ENCODE measurements at regions of chr14 and their contacts with region 1.

Region 1: DNA sequence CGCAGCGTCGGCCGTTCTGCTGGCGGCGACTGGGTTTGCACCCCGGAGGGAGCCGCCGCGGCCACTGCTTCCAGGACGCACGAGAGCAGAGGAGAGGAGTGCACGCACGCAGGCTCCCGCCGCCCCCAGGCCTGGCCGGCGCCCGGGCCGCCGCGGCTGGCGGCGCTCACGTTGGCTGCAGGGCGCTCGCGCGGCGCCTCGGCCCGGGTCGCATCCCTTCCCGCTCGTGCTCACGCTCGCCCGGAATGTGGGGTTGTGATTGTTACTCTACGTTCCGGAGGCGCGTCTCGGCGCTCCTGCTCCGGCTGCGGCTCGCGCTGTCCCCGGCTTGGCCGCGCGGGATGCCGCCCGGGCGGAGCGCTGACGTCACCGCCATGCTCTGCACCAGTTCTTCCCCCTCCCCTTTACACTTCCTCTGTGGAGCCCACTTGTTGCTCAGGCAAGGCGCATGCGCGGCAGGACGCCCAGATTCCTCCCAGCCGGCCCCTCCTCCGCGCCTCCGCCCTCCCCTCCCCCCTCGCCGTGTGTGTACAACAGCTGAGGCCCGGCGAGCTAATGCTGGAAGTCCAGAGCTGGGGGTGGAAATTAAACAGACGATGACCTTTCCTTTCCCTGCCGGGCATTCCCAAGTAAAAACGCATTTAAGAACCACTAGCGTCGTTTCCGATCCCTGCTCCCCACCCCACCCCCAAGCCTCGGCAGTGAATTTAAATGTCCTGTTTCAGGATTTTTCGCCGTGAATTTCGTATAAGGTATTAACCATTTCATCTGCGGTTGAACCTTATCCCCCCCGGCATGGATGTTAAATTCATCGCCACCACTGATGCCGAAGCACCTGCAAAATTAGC is at the start of gene IRF2BPL:
- DNase-seq: peak; percentile 96
- H3K4me3 Mint-ChIP-seq: peak within 1 kb of the TSS; percentile 93
- H3K27ac Mint-ChIP-seq: peak within 1 kb of the TSS; percentile 97
- H3K4me1 Mint-ChIP-seq: peaks cover 72% of the 10 kb centered on the region
- H3K27me3 Mint-ChIP-seq: no peaks in the 10 kb centered on the region

Region 2: DNA sequence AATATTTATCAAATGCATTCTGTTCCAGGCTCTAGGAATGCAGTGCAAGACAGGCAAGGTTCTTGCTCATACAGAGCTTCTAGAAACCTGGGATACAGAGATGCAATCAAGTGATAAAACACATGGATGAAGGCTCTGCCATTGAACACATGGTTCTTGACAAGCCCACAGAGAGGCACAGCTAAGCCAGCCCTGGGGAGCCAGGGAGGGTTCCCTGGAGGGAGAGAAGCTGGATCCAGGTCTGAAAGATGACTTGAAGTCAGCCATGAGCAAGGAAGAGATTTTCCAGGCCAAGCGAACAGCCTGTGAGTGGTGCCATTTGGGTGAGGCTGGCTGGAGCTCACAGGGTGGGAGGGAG is 66.3 kb before region 1 on chr14:
- CTCF ChIA-PET with region 1: interaction called, 15 read pairs
- DNase-seq: no peak
- H3K4me3 Mint-ChIP-seq: peak overlapping the region; percentile 69
- H3K27ac Mint-ChIP-seq: peak overlapping the region; percentile 96
- H3K4me1 Mint-ChIP-seq: peaks cover 90% of the 10 kb centered on the region
- H3K27me3 Mint-ChIP-seq: peaks cover 27% of the 10 kb centered on the region

Region 3: DNA sequence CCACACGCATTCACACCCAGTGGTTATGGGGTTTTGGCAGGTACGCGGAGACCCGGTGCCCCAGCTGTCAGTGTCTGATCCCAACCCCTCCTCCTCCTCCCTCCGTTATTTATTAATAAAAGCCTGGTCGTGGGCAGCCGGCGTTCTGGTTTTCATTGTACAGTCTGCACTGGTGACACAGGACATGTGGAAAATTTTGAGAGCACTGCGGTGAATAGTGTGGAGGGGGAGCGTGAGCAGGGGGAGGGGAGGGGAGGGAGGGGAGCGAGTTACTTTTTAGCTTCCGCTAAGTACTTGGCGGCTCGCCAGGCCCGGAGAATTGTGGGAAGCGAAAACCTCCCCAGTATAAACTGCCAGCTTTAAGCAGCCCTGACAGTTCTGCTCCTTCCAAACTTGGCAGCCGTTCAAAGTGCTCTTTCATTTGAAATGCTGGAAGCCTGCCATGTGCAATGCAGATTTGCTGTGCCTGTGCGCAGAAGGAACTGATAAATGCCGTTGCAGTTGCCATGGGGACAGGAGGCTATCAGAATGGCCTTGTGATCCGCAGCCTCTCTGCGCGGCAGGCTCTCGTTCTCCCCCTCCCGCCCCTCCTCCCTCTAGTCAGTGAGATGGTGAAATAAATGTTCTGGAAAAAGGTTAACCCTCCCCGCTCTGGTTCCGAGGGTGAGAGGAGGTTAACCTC is 11.6 kb after region 1 on chr14:
- CTCF ChIA-PET with region 1: interaction called, 22 read pairs
- DNase-seq: peak; percentile 96
- H3K4me3 Mint-ChIP-seq: peak overlapping the region; percentile 65
- H3K27ac Mint-ChIP-seq: peak overlapping the region; percentile 100
- H3K4me1 Mint-ChIP-seq: peaks cover 94% of the 10 kb centered on the region
- H3K27me3 Mint-ChIP-seq: peaks cover 6% of the 10 kb centered on the region

Region 4: GRCh38 chr14:77290741-77291140 is 262.1 kb after region 1 on chr14:
- CTCF ChIA-PET with region 1: no interaction called
- DNase-seq: no peak
- H3K4me3 Mint-ChIP-seq: no peak overlapping the region
- H3K27ac Mint-ChIP-seq: no peak overlapping the region
- H3K4me1 Mint-ChIP-seq: no peaks in the 10 kb centered on the region
- H3K27me3 Mint-ChIP-seq: no peaks in the 10 kb centered on the region

Region 5: GRCh38 chr14:77717608-77718305 is 689.1 kb after region 1 on chr14:
- CTCF ChIA-PET with region 1: no interaction called
- DNase-seq: no peak
- H3K4me3 Mint-ChIP-seq: no peak overlapping the region
- H3K27ac Mint-ChIP-seq: no peak overlapping the region
- H3K4me1 Mint-ChIP-seq: peaks cover 1% of the 10 kb centered on the region
- H3K27me3 Mint-ChIP-seq: no peaks in the 10 kb centered on the region